ENCODE measurements at regions of chr17 and their contacts with region 1.

Region 1: GRCh38 chr17:48908047-48908843 is at the start of gene UBE2Z:
- DNase-seq: peak; percentile 94 to 97
- ATAC-seq: peak; percentile 97 to 99 (median 98)
- H3K4me3 ChIP-seq: peak within 1 kb of the TSS; percentile 85
- H3K27ac ChIP-seq: peak within 1 kb of the TSS; percentile 95
- H3K4me1 ChIP-seq: peaks cover 18% of the 10 kb centered on the region
- H3K27me3 ChIP-seq: no peaks in the 10 kb centered on the region
- CTCF ChIP-seq: no peak
- total RNA-seq, gene UBE2Z: 29.8 to 46.7 (median 34.8) TPM

Region 2: DNA sequence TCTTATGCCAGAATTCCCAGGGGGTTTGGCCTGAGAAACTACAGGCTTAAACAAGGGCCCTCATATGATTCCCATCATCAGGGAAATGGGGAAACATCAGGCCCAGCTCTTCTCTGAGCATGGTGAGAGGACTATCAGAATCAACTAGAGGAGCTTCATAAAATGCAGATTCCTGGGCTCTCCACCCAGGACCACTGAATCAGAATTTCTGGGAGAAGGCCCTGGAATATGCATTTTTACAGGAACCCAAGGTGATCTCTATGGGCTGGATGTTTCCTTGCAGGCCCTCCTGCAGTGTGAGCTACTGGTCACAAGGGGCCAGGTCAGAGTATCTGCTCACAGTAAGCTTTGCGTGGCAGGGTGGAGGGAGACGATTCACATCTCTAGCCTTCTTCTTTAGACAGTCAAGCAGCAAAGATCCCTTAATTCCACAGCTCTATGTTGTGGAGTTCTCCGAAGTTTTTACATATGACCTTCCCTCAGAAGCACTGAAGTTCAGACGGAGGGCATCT is 140.9 kb before region 1 on chr17:
- intact Hi-C with region 1: no loop called
- DNase-seq: no peak
- ATAC-seq: no peak
- H3K4me3 ChIP-seq: no peak overlapping the region
- H3K27ac ChIP-seq: no peak overlapping the region
- H3K4me1 ChIP-seq: no peaks in the 10 kb centered on the region
- H3K27me3 ChIP-seq: peaks cover 2 to 66% (median 3%) of the 10 kb centered on the region in 3 donors
- CTCF ChIP-seq: no peak

Region 3: GRCh38 chr17:48944519-48945260 is 36.4 kb after region 1 on chr17 and contains the start of gene SNF8:
- intact Hi-C with region 1: loop called (anchors 5 kb)
- DNase-seq: peak; percentile 93 to 96
- ATAC-seq: peak; percentile 97 to 99 (median 98)
- H3K4me3 ChIP-seq: peak within 1 kb of the TSS; percentile 93
- H3K27ac ChIP-seq: peak within 1 kb of the TSS; percentile 95
- H3K4me1 ChIP-seq: peaks cover 10% of the 10 kb centered on the region
- H3K27me3 ChIP-seq: peaks cover 0 to 4% (median 0%) of the 10 kb centered on the region in 3 donors
- CTCF ChIP-seq: no peak
- total RNA-seq, gene SNF8: 69.7 to 96.7 (median 75.0) TPM

Measured in psoas muscle (tissue), 8 donors.